Tibial artery (tissue), 4 donors: ENCODE measurements at regions of chr15 and their contacts with region 1.

Region 1: DNA sequence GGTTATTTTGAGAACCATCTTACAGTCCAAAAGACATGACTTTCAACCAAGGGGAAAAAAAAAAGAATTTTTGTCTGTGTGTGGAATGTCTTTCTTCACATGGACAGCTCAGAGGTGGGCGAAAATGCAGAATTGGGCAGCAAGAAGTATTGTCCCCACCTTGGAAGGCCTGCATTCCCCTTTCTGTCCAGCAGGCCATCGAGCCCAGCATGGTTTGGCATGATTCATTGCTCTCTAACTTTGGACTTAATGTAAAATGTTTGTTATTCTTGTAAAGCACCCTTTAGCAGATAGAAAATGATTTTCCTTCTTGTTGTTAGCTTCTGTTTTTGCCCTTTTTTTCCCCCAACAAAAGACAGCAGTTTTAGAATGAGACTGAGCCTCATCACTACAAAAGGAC is 12.4 kb downstream of the MYO1E start:
- DNase-seq: no peak
- H3K4me3 ChIP-seq: no peak overlapping the region
- H3K27ac ChIP-seq: peak overlapping the region in 1 of 2 donors; percentile 11
- H3K4me1 ChIP-seq: peaks cover 0 to 39% (median 3%) of the 10 kb centered on the region in 4 donors
- H3K27me3 ChIP-seq: no peaks in the 10 kb centered on the region
- CTCF ChIP-seq: peak in 1 of 2 experiments; percentile 22

Region 2: GRCh38 chr15:59247364-59247763 is 112.9 kb before region 1 on chr15:
- intact Hi-C with region 1: loop called (anchors 10 kb)
- DNase-seq: peak; percentile 55 to 72
- H3K4me3 ChIP-seq: no peak overlapping the region
- H3K27ac ChIP-seq: no peak overlapping the region
- H3K4me1 ChIP-seq: peaks cover 0 to 6% (median 0%) of the 10 kb centered on the region in 4 donors
- H3K27me3 ChIP-seq: no peaks in the 10 kb centered on the region
- CTCF ChIP-seq: peak; percentile 55 to 57